Gastrocnemius medialis (tissue), 4 donors: ENCODE measurements at regions of chr15 and their contacts with region 1.

Region 1: DNA sequence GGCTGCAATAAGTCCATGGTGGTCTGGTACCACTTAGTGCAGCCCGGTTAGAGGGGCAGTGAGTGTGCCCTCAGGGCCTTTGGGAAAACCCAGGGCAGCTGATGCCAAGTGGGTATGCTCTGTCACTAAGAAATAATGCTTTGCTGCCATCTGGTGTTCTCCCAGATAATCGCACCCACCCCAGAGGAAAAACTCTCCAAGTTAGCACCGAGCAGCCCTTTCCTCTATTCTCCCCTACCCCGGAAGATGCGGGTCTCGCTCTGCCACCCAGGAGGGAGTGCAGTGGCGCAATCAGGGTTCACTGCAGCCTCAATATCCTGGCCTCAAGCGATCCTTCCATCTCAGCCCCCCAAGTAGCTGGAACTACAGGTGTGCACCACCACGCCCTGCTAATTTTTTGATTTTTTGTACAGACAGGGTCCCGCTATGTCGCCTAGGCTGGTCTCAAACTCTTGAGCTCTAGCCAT is 21.3 kb upstream of the DAPK2 start:
- DNase-seq: peak; percentile 37 to 61
- ATAC-seq: peak; percentile 11 to 19
- H3K4me3 ChIP-seq: no peak overlapping the region
- H3K27ac ChIP-seq: peak overlapping the region in 2 of 4 donors; percentile 4 to 94
- H3K4me1 ChIP-seq: peaks cover 22 to 34% of the 10 kb centered on the region in 2 donors
- H3K27me3 ChIP-seq: no peaks in the 10 kb centered on the region
- CTCF ChIP-seq: peak; percentile 78 to 93 (median 87)
- POLR2A ChIP-seq: no peak

Region 2: GRCh38 chr15:63752075-63752684 is 315.4 kb before region 1 on chr15:
- in situ Hi-C with region 1: loop called (anchors 5 kb)
- intact Hi-C with region 1: loop called (anchors 1 kb)
- DNase-seq: peak in 1 of 2 donors; percentile 27
- ATAC-seq: peak; percentile 90 to 91
- H3K4me3 ChIP-seq: no peak overlapping the region
- H3K27ac ChIP-seq: peak overlapping the region; percentile 29 to 66 (median 50)
- H3K4me1 ChIP-seq: peaks cover 0 to 13% of the 10 kb centered on the region in 2 donors
- H3K27me3 ChIP-seq: no peaks in the 10 kb centered on the region
- CTCF ChIP-seq: peak; percentile 77 to 82 (median 79)
- POLR2A ChIP-seq: no peak

Region 3: DNA sequence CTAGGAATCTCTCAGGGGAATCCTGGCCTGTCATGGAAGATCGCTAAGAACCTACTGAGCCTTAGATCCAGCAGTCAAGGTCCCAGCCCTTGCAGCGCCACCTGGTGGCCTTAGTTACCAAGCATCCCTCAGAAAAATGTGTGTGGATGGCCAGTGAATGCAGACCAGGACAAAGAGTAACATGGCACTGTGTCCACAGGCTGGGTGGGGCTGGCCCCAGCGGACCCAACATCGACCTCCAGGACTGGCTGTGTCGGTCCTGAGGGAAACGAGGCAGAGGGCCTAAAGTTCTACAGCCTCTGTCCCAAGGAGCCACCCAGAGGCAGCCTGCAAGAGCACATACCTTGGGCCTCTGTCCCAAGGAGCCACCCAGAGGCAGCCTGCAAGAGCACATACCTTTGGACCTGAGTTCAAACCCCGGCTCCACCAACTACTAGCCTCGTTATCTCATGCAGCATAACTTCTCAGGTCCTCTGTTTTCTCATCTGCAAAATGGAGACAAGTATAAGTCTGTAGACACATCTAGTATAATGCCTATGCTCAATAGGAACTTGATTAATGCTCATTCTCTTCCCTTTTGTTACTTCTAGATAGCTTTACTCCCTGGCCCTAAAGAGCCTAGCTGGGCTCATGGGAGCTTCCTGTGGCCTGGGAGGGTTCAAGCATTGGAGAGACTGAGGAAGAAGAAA is 176.4 kb before region 1 on chr15:
- in situ Hi-C with region 1: loop called in 1 of 4 experiments (anchors 25 kb)
- intact Hi-C with region 1: loop called (anchors 1 kb)
- DNase-seq: peak; percentile 39 to 79
- ATAC-seq: peak; percentile 27 to 39
- H3K4me3 ChIP-seq: no peak overlapping the region
- H3K27ac ChIP-seq: peak overlapping the region in 3 of 4 donors; percentile 15 to 93 (median 35)
- H3K4me1 ChIP-seq: peaks cover 58 to 66% of the 10 kb centered on the region in 2 donors
- H3K27me3 ChIP-seq: no peaks in the 10 kb centered on the region
- CTCF ChIP-seq: peak; percentile 80 to 87 (median 83)
- POLR2A ChIP-seq: no peak

Region 4: DNA sequence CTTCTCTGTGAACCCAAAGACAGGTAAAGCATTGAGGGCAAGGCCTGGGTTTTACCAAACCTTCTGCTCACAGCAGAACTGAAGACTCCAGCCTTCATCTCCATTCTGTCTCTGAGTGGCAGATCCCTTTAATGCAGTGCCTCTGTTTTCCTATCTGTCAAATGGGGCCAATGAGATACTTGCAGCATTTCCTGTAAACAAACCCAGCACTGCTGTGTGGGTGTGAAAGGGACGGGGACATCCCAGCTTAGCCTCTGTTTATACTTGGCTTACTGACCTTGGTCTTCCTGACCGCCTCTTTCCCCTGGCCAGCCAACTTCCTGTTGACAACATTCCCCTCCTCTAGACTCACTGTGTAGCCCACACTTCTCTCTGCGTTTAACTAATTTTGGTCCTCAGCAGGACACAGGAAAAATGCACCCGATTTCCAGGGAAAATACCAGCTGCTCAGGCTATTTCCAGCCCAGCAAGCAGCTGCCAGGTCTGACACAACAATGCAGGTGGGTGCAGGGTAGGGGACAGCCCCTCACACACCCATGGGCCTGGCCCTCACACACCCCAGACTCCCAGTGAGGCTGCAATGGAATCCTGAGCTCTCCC is 128.0 kb before region 1 on chr15:
- in situ Hi-C with region 1: no loop called
- intact Hi-C with region 1: loop called (anchors 5 kb)
- DNase-seq: peak; percentile 51 to 70
- ATAC-seq: peak; percentile 72 to 88
- H3K4me3 ChIP-seq: no peak overlapping the region
- H3K27ac ChIP-seq: peak overlapping the region; percentile 73 to 75 (median 74)
- H3K4me1 ChIP-seq: peaks cover 31 to 38% of the 10 kb centered on the region in 2 donors
- H3K27me3 ChIP-seq: no peaks in the 10 kb centered on the region
- CTCF ChIP-seq: no peak
- POLR2A ChIP-seq: no peak

Region 5: GRCh38 chr15:64093627-64094417 is 26.2 kb after region 1 on chr15 and contains the start of gene CIAO2A:
- in situ Hi-C with region 1: no loop called
- intact Hi-C with region 1: loop called (anchors 1 kb)
- DNase-seq: peak; percentile 96 to 97
- ATAC-seq: peak; percentile 81 to 85
- H3K4me3 ChIP-seq: peak within 1 kb of the TSS; percentile 74 to 85 (median 77)
- H3K27ac ChIP-seq: peak within 1 kb of the TSS; percentile 91 to 96 (median 93)
- H3K4me1 ChIP-seq: peaks cover 62 to 65% of the 10 kb centered on the region in 2 donors
- H3K27me3 ChIP-seq: no peaks in the 10 kb centered on the region
- CTCF ChIP-seq: no peak
- POLR2A ChIP-seq: peak; percentile 79 to 84
- total RNA-seq, gene CIAO2A: 26.6 to 65.2 (median 55.1) TPM

Region 6: GRCh38 chr15:64381000-64381752 is 313.6 kb after region 1 on chr15 and contains the start of gene PCLAF:
- in situ Hi-C with region 1: no loop called
- intact Hi-C with region 1: no loop called
- DNase-seq: peak; percentile 92
- ATAC-seq: peak; percentile 99 to 100
- H3K4me3 ChIP-seq: peak within 1 kb of the TSS; percentile 47 to 74 (median 61)
- H3K27ac ChIP-seq: no peak within 1 kb of the TSS
- H3K4me1 ChIP-seq: peaks cover 9 to 10% of the 10 kb centered on the region in 2 donors
- H3K27me3 ChIP-seq: no peaks in the 10 kb centered on the region
- CTCF ChIP-seq: no peak
- POLR2A ChIP-seq: no peak
- total RNA-seq, gene PCLAF: 1.6 TPM in 1 of 4 donors, not detected in the others

Region 7: DNA sequence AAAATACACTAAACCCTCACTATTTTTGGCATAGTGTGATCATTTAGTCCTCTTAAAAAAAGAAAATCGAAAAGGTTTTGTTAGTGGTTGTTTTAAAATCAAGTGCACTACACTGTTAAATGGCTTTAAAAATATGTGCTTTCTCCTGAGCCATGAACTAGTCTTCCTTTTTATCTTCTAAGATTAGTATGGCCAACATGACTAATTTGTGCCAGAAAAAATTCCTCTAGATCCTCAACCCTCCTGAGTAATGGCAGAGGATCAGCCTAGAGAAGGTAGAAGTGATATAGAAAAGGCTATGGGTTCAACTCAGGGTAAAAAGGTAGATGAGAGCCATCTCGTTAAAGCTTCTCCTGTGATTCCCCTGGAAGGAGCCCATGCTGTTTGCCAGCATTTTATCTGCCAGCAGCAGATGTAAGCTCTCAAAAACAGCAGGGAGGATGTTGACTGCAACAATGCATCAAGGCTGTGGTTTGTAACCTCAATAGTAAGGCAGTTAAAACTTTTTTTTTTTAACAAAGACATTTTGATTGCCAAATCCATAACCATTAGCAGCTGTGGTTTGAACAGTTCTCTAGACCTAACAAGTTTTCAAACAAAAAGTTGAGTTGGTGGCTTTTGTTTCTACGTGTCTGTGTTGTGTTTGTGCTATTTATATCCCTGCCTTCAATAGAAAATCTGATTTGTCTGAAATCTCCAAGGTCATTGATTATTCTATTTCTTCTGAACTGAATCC is 362.6 kb after region 1 on chr15:
- in situ Hi-C with region 1: no loop called
- intact Hi-C with region 1: no loop called
- DNase-seq: no peak
- ATAC-seq: no peak
- H3K4me3 ChIP-seq: no peak overlapping the region
- H3K27ac ChIP-seq: no peak overlapping the region
- H3K4me1 ChIP-seq: no peaks in the 10 kb centered on the region
- H3K27me3 ChIP-seq: no peaks in the 10 kb centered on the region
- CTCF ChIP-seq: no peak
- POLR2A ChIP-seq: no peak